Activated CD4-positive, alpha-beta memory T cell treated with anti-CD3 and anti-CD28 coated beads for 36 hours (primary cell): ENCODE measurements at regions of chr6 and their contacts with region 1.

Region 1: GRCh38 chr6:53492860-53493634 is 51.9 kb downstream of the GCLC start:
- DNase-seq: peak; percentile 76
- H3K4me3 Mint-ChIP-seq: no peak overlapping the region
- H3K27ac Mint-ChIP-seq: peak overlapping the region; percentile 25
- H3K4me1 Mint-ChIP-seq: peaks cover 28% of the 10 kb centered on the region
- H3K27me3 Mint-ChIP-seq: peaks cover 9% of the 10 kb centered on the region

Region 2: DNA sequence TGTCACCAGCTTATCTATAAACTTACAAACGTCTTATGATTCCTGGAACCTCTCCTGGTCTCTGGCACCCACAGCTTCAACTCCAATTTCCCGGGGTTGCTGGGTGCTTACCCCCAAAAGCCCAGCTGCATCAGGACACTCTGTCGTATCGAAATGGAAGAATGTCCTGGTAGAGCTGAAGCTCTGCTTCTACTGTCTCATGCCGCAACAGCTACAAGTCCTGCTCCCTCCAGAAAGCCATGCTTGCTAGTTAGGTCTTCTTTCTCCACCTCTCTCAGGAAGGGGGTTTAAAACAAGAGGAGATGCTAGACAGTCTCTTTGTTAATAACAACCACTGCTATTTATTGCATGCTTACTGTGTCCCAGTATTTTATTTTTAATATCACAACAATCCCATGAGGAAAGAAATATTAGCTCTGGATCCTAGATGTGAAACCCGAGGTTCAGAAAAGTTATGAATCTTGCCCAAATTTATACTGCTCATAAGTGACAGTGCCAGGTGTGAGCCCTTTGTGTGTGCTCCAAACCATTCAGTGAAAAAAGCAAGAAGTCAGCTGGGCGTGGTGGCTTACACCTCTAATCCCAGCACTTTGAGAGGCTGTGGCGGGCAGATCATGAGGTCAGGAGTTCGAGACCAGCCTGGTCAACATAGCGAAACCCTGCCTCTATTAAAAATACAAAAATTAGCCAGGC is 262.1 kb before region 1 on chr6:
- CTCF ChIA-PET with region 1: interaction called, 5 read pairs
- POLR2A ChIA-PET with region 1: no interaction called
- intact Hi-C with region 1: loop called (anchors 1 kb)
- DNase-seq: no peak
- H3K4me3 Mint-ChIP-seq: no peak overlapping the region
- H3K27ac Mint-ChIP-seq: no peak overlapping the region
- H3K4me1 Mint-ChIP-seq: peaks cover 32% of the 10 kb centered on the region
- H3K27me3 Mint-ChIP-seq: no peaks in the 10 kb centered on the region

Region 3: DNA sequence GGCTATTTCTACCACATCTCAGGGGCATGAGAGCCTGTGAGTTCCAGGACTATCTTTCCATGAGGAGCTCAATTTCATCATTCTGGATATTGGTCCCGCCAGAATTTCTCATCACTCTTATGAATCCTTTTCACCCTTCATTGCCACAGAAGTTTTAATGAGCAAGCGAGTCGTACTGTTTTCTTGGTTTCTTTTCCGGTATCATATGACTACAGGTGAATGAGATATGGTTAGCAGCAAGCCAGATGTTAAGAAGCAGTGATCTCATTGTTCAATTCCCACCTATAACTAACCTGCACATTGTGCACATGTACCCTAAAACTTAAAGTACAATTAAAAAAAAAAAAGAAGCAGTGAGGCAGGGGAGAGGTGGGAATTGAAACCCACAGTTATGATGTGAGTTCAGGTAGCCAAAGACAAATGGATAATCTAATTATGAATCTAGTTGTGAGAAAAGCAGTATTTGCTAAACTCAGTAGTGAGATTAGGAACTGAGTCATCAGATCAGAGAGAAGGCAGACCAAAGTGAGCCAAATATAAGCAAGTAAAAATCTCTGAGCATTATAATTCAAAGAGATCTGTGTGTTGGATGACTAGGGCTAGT is 66.3 kb before region 1 on chr6:
- CTCF ChIA-PET with region 1: interaction called, 4 read pairs
- POLR2A ChIA-PET with region 1: no interaction called
- intact Hi-C with region 1: loop called (anchors 1 kb)
- DNase-seq: no peak
- H3K4me3 Mint-ChIP-seq: no peak overlapping the region
- H3K27ac Mint-ChIP-seq: no peak overlapping the region
- H3K4me1 Mint-ChIP-seq: peaks cover 30% of the 10 kb centered on the region
- H3K27me3 Mint-ChIP-seq: peaks cover 11% of the 10 kb centered on the region

Region 4: GRCh38 chr6:53451165-53451564 is 41.9 kb before region 1 on chr6:
- CTCF ChIA-PET with region 1: no interaction called
- POLR2A ChIA-PET with region 1: no interaction called
- intact Hi-C with region 1: no loop called
- DNase-seq: no peak
- H3K4me3 Mint-ChIP-seq: no peak overlapping the region
- H3K27ac Mint-ChIP-seq: no peak overlapping the region
- H3K4me1 Mint-ChIP-seq: no peaks in the 10 kb centered on the region
- H3K27me3 Mint-ChIP-seq: no peaks in the 10 kb centered on the region

Region 5: GRCh38 chr6:53544470-53545308 is 51.6 kb after region 1 on chr6 and contains the start of gene GCLC:
- CTCF ChIA-PET with region 1: interaction called, 14 read pairs
- POLR2A ChIA-PET with region 1: interaction called, 3 read pairs
- intact Hi-C with region 1: loop called (anchors 1 kb)
- DNase-seq: peak; percentile 94
- H3K4me3 Mint-ChIP-seq: peak within 1 kb of the TSS; percentile 94
- H3K27ac Mint-ChIP-seq: peak within 1 kb of the TSS; percentile 86
- H3K4me1 Mint-ChIP-seq: peaks cover 62% of the 10 kb centered on the region
- H3K27me3 Mint-ChIP-seq: no peaks in the 10 kb centered on the region
- total RNA-seq, gene GCLC: 27.2 to 33.3 TPM

Region 6: GRCh38 chr6:53593001-53593488 is 100.0 kb after region 1 on chr6:
- CTCF ChIA-PET with region 1: interaction called, 9 read pairs
- POLR2A ChIA-PET with region 1: no interaction called
- intact Hi-C with region 1: loop called (anchors 1 kb)
- DNase-seq: no peak
- H3K4me3 Mint-ChIP-seq: no peak overlapping the region
- H3K27ac Mint-ChIP-seq: peak overlapping the region; percentile 10
- H3K4me1 Mint-ChIP-seq: peaks cover 10% of the 10 kb centered on the region
- H3K27me3 Mint-ChIP-seq: peaks cover 9% of the 10 kb centered on the region

Region 7: GRCh38 chr6:53718597-53719460 is 225.8 kb after region 1 on chr6:
- CTCF ChIA-PET with region 1: interaction called, 206 read pairs
- POLR2A ChIA-PET with region 1: interaction called, 6 read pairs
- intact Hi-C with region 1: no loop called
- DNase-seq: peak; percentile 34
- H3K4me3 Mint-ChIP-seq: no peak overlapping the region
- H3K27ac Mint-ChIP-seq: no peak overlapping the region
- H3K4me1 Mint-ChIP-seq: peaks cover 5% of the 10 kb centered on the region
- H3K27me3 Mint-ChIP-seq: peaks cover 13% of the 10 kb centered on the region

Region 8: GRCh38 chr6:53734473-53735299 is 241.6 kb after region 1 on chr6:
- CTCF ChIA-PET with region 1: interaction called, 206 read pairs
- POLR2A ChIA-PET with region 1: no interaction called
- intact Hi-C with region 1: no loop called
- DNase-seq: peak; percentile 57
- H3K4me3 Mint-ChIP-seq: no peak overlapping the region
- H3K27ac Mint-ChIP-seq: no peak overlapping the region
- H3K4me1 Mint-ChIP-seq: peaks cover 24% of the 10 kb centered on the region
- H3K27me3 Mint-ChIP-seq: peaks cover 3% of the 10 kb centered on the region